ENCODE measurements at regions of chr7 and their contacts with region 1.

Region 1: GRCh38 chr7:130982160-130982638 is 248.2 kb upstream of the KLF14 start:
- DNase-seq: peak; percentile 69
- H3K4me3 Mint-ChIP-seq: no peak overlapping the region
- H3K27ac Mint-ChIP-seq: no peak overlapping the region
- H3K4me1 Mint-ChIP-seq: peaks cover 21% of the 10 kb centered on the region
- H3K27me3 Mint-ChIP-seq: no peaks in the 10 kb centered on the region
- CTCF ChIP-seq: peak; percentile 68

Region 2: DNA sequence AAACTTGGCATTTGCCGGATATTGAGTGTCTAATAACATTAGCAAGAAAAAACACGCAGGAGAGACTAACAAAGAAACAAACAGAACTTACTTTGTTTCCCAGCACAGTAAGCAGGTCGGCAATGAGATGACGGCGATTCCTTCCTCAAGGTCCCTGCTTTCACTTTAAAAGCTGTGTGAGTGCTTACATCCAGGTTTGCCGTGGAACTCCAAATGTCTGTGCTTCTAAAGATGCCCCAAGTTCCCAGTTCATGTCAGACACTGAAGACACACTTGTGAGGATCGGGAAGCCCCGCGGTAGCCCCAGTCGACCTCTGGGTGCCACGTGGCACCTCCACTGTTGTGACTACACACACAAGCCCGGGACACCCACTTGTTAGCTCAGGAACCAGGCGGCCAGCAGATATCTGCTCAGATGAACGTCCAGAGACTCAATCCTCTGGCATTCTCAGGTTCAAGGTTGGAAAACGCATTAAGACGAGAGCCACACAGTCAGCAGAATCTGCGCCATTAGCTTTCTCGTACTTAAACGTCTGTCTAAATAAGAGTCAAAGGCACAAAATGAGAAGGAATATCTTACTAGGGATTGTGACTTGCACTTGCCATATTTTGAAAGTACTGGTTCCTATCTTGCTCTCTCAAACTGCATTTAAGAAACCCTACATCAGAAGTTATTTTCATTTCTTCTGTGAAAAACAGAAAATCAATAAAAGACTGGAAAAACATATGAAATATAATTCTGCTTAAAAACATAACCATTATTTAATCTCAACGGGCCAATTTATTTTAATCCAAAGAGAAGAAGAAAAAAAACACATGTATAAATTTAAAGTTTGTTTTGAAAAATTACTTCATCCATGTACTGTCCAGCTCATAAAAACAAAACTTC is 40.6 kb before region 1 on chr7:
- CTCF ChIA-PET with region 1: interaction called, 15 read pairs
- POLR2A ChIA-PET with region 1: interaction called, 7 read pairs
- intact Hi-C with region 1: no loop called
- DNase-seq: peak; percentile 41
- H3K4me3 Mint-ChIP-seq: peak overlapping the region; percentile 76
- H3K27ac Mint-ChIP-seq: peak overlapping the region; percentile 90
- H3K4me1 Mint-ChIP-seq: peaks cover 70% of the 10 kb centered on the region
- H3K27me3 Mint-ChIP-seq: no peaks in the 10 kb centered on the region
- CTCF ChIP-seq: no peak

Region 3: GRCh38 chr7:130996841-130997231 is 14.6 kb after region 1 on chr7:
- CTCF ChIA-PET with region 1: interaction called, 102 read pairs
- POLR2A ChIA-PET with region 1: interaction called, 55 read pairs
- intact Hi-C with region 1: no loop called
- DNase-seq: peak; percentile 73
- H3K4me3 Mint-ChIP-seq: peak overlapping the region; percentile 21
- H3K27ac Mint-ChIP-seq: peak overlapping the region; percentile 96
- H3K4me1 Mint-ChIP-seq: peaks cover 54% of the 10 kb centered on the region
- H3K27me3 Mint-ChIP-seq: no peaks in the 10 kb centered on the region
- CTCF ChIP-seq: no peak

Region 4: DNA sequence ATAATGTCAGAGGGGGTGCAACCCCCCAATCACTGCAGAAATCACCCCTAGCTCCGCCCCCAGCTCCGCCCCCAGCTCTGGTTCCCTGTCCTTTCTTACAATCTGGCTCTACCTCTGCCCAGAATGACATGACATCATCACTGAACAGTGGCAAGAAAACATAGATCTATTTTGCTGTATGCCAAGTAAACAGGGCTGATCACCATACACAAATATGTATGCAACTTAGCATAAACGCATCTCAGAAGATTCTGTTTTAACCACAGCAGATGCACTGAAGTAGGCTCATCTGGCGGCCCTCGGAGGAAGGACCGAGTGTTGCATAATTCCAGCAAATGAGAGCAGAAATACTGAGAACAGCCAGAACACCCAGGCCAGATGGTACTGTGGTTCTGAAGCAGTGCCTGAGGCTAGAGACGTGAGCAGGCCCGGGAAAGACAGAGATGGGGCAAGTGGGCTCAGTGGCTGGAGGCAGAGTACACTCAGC is 45.1 kb after region 1 on chr7:
- CTCF ChIA-PET with region 1: interaction called, 15 read pairs
- POLR2A ChIA-PET with region 1: interaction called, 6 read pairs
- intact Hi-C with region 1: no loop called
- DNase-seq: peak; percentile 89
- H3K4me3 Mint-ChIP-seq: peak overlapping the region; percentile 64
- H3K27ac Mint-ChIP-seq: peak overlapping the region; percentile 88
- H3K4me1 Mint-ChIP-seq: peaks cover 31% of the 10 kb centered on the region
- H3K27me3 Mint-ChIP-seq: no peaks in the 10 kb centered on the region
- CTCF ChIP-seq: no peak